ENCODE measurements at regions of chr1 and their contacts with region 1.

Region 1: DNA sequence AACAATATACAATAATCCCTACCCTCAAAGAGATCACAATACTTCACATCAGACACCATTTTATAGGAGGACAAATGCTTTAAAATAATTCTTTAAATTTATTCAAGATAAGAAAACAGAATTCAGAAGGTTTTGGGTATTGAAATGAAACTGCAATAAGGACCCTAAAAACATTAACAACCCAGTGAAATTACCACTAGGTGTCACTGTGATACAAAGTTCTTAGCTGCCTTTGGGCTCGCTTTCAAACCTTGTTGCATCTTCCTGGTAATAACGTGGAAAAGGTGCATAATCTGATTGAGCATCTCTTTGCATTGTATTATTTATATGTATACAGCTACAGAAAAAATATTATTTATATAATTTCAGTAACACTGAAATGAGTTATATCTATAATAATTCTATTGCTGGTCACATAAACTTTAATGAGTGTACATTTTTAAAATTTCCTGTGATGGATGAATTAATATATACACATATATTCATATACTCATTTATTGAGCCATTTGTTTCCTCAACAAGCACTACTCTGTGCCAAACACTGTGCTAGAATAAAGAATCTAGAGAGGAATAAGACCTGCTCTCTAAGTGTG is 185.2 kb downstream of the FAF1 start:
- DNase-seq: no peak
- ATAC-seq: peak in 1 of 4 donors; percentile 62
- H3K4me3 ChIP-seq: no peak overlapping the region
- H3K27ac ChIP-seq: no peak overlapping the region
- H3K4me1 ChIP-seq: no peaks in the 10 kb centered on the region
- H3K27me3 ChIP-seq: no peaks in the 10 kb centered on the region
- CTCF ChIP-seq: peak; percentile 66 to 90 (median 74)
- POLR2A ChIP-seq: no peak

Region 2: DNA sequence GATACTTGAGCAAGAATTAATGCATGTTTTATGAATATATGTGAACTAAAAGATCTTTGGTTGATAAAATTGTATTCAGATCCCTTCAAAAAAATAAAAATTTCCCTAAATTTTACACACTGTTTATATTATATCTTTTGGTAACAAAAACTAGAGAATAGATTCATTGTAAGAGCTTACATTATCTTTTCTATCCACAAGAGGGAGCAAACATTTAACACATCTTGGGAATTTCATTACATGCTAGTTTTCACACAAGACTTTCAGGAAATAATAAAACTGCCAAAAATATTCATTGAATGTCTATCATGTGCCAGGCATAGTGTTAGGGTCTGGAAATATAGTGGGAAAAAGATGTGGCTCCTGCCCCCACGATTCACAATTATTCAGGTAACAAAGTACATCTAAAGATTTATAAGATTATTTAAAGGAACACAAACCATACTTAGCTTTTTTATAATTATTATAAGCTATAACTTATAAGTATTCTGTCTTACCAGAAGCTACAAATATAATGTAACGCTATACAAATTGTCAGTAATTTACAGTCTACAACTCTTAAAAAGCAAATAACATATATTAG is 154.6 kb after region 1 on chr1:
- intact Hi-C with region 1: loop called in 2 of 10 experiments (anchors 5 to 10 kb)
- DNase-seq: no peak
- ATAC-seq: no peak
- H3K4me3 ChIP-seq: no peak overlapping the region
- H3K27ac ChIP-seq: no peak overlapping the region
- H3K4me1 ChIP-seq: peaks cover 0 to 14% (median 1%) of the 10 kb centered on the region in 12 donors
- H3K27me3 ChIP-seq: no peaks in the 10 kb centered on the region
- CTCF ChIP-seq: peak; percentile 39 to 71 (median 53)
- POLR2A ChIP-seq: no peak

Region 3: GRCh38 chr1:50959913-50960844 is 185.3 kb after region 1 on chr1 and contains the start of gene FAF1:
- intact Hi-C with region 1: loop called in 4 of 10 experiments (anchors 5 to 10 kb)
- DNase-seq: peak; percentile 96 to 98 (median 97)
- ATAC-seq: peak; percentile 96 to 99 (median 99)
- H3K4me3 ChIP-seq: peak within 1 kb of the TSS; percentile 44 to 89 (median 75)
- H3K27ac ChIP-seq: peak within 1 kb of the TSS; percentile 51 to 93 (median 86)
- H3K4me1 ChIP-seq: peaks cover 0 to 37% (median 17%) of the 10 kb centered on the region in 12 donors
- H3K27me3 ChIP-seq: no peaks in the 10 kb centered on the region
- CTCF ChIP-seq: peak in 6 of 12 donors; percentile 13 to 35 (median 20)
- POLR2A ChIP-seq: peak; percentile 37 to 88
- total RNA-seq, gene FAF1: 46.6 to 112 (median 83.6) TPM

Region 4: DNA sequence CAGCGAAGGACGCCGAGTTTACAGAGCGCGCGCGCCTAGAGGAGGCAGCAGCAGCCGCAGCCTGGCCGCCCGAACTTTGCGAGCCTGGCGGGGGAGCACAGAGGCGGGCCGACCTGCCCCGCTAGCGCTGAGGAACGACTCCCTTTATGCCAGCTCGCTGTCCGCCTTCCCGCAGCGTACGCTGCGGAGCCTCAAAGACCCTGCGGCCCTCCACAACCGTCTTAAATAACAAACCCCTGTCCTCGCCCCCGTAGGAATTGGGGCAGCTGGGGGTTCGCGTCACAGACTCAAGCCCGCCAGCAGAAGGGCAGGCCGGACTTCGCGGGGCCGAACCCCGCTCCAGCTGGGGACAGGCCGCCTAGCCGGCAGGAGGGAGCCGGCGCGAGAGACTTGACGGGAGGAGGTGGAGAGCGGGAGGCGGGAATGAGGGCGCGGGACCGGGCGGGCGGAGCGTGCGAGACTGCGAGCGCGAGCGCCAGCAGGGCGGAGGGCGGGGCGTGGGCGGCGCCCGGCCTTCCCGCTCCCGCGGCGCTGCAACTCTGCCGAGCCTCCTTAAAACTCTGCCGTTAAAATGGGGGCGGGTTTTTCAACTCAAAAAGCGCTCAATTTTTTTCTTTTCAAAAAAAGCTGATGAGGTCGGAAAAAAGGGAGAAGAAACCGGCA is 193.4 kb after region 1 on chr1:
- intact Hi-C with region 1: loop called in 3 of 10 experiments (anchors 5 to 10 kb)
- DNase-seq: peak; percentile 94 to 96 (median 95)
- ATAC-seq: peak; percentile 90 to 96 (median 95)
- H3K4me3 ChIP-seq: peak overlapping the region; percentile 57 to 91 (median 82)
- H3K27ac ChIP-seq: peak overlapping the region; percentile 92 to 99 (median 96)
- H3K4me1 ChIP-seq: peaks cover 0 to 39% (median 12%) of the 10 kb centered on the region in 12 donors
- H3K27me3 ChIP-seq: no peaks in the 10 kb centered on the region
- CTCF ChIP-seq: peak in 11 of 12 donors; percentile 12 to 56 (median 41)
- POLR2A ChIP-seq: peak in 1 of 2 donors; percentile 70

Region 5: GRCh38 chr1:51044834-51045233 is 270.0 kb after region 1 on chr1:
- intact Hi-C with region 1: loop called in 9 of 10 experiments (anchors 2 to 5 kb)
- DNase-seq: no peak
- ATAC-seq: no peak
- H3K4me3 ChIP-seq: no peak overlapping the region
- H3K27ac ChIP-seq: no peak overlapping the region
- H3K4me1 ChIP-seq: no peaks in the 10 kb centered on the region
- H3K27me3 ChIP-seq: peaks cover 0 to 7% (median 0%) of the 10 kb centered on the region in 9 donors
- CTCF ChIP-seq: peak in 10 of 12 donors; percentile 34 to 59 (median 52)
- POLR2A ChIP-seq: no peak

Region 6: DNA sequence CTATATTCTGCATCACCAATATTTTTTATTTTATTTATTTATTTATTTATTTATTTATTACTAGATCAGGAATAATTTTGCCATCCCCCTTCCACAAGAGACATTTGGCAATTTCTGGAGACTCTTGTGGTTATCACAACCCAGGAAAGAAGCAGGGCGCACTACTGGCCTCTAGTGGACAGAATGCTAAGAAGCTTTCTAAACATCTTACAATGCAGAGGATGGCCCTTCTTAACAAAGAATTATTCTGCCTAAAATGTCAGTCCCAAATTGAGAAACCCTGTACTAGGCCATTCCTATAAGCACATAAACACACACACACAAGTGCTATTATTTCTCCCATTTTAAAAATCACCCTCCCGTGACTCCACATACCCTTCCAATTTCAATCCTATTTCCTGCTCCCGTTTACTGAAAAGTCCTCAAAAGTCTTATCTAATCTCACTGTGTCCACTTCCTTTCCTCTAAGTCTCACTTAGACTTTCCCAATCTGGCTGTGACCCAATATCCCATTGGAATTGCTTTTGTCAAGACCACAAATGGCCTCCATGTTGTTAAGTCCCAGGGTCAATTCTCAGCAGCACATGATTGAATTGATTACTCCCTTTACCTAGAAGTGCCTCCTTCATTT is 417.5 kb after region 1 on chr1:
- intact Hi-C with region 1: loop called in 9 of 10 experiments (anchors 2 to 10 kb)
- DNase-seq: peak in 4 of 5 donors; percentile 47 to 52 (median 50)
- ATAC-seq: peak in 3 of 4 donors; percentile 30 to 69 (median 61)
- H3K4me3 ChIP-seq: no peak overlapping the region
- H3K27ac ChIP-seq: no peak overlapping the region
- H3K4me1 ChIP-seq: no peaks in the 10 kb centered on the region
- H3K27me3 ChIP-seq: no peaks in the 10 kb centered on the region
- CTCF ChIP-seq: peak; percentile 68 to 93 (median 84)
- POLR2A ChIP-seq: no peak

Measured in heart left ventricle (tissue), 16 donors.